WTC11 (cell line): ENCODE measurements at regions of chr5 and their contacts with region 1.

Region 1: GRCh38 chr5:78760770-78761169 is 112.2 kb upstream of the LHFPL2 start:
- DNase-seq: no peak
- ATAC-seq: peak; percentile 75
- H3K4me3 Mint-ChIP-seq: no peak overlapping the region
- H3K27ac Mint-ChIP-seq: no peak overlapping the region
- H3K4me1 Mint-ChIP-seq: peaks cover 21% of the 10 kb centered on the region
- H3K27me3 Mint-ChIP-seq: peaks cover under 1% of the 10 kb centered on the region; the same call in 1 of the 2 replicates
- CTCF ChIP-seq: no peak

Region 2: DNA sequence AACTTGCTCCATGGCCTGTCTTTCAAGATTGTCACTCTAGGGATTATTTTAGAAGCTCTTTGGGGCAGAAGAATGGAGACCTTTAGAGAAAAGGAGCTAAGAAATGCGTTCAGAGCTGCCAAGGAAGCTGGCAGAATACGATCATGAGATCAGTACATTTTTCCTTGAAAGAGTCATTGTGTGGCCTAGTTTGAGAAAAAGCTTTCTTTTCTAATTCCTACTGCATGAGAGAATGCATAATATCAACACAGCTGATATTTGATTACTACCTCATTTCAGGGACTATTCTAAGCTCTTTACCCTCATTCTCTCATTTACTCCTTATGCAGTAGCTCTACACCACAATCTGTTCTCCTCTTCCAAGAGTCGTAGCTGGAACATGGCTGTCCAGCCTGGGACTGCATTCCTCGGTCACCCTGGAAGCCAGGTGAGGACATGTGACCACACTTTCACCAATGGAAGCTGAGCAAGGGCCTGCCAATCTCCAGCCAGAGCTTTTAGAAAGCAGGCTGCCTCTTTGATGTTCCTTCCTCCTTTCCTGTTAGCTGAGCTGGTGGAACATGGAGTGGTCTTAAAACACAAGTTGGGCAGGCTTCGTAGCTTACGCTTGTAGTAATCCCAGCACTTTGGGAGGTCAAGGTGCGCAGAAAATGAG is 12.9 kb before region 1 on chr5:
- CTCF ChIA-PET with region 1: interaction called, 48 read pairs
- POLR2A ChIA-PET with region 1: no interaction called
- DNase-seq: no peak
- ATAC-seq: peak; percentile 39; the same call in 1 of the 2 replicates
- H3K4me3 Mint-ChIP-seq: no peak overlapping the region
- H3K27ac Mint-ChIP-seq: peak overlapping the region; percentile 48; the same call in 1 of the 2 replicates
- H3K4me1 Mint-ChIP-seq: peaks cover 31% of the 10 kb centered on the region
- H3K27me3 Mint-ChIP-seq: no peaks in the 10 kb centered on the region; the same call in 1 of the 2 replicates
- CTCF ChIP-seq: no peak

Region 3: GRCh38 chr5:78984439-78985115 is 223.8 kb after region 1 on chr5:
- CTCF ChIA-PET with region 1: no interaction called
- POLR2A ChIA-PET with region 1: no interaction called
- DNase-seq: peak; percentile 84
- ATAC-seq: peak; percentile 92
- H3K4me3 Mint-ChIP-seq: peak overlapping the region; percentile 75
- H3K27ac Mint-ChIP-seq: peak overlapping the region; percentile 92; the same call in 1 of the 2 replicates
- H3K4me1 Mint-ChIP-seq: peaks cover 28% of the 10 kb centered on the region
- H3K27me3 Mint-ChIP-seq: peaks cover 10% of the 10 kb centered on the region
- CTCF ChIP-seq: no peak